PC-9 (cell line): ENCODE measurements at regions of chr15 and their contacts with region 1.

Region 1: GRCh38 chr15:99476413-99477222 is 89.2 kb upstream of the MEF2A start:
- DNase-seq: peak; percentile 42 to 75
- H3K4me3 ChIP-seq: no peak overlapping the region
- H3K27ac ChIP-seq: no peak overlapping the region
- H3K4me1 ChIP-seq: peaks cover 13% of the 10 kb centered on the region
- H3K27me3 ChIP-seq: no peaks in the 10 kb centered on the region
- CTCF ChIP-seq: no peak

Region 2: GRCh38 chr15:99409097-99409473 is 67.5 kb before region 1 on chr15:
- CTCF ChIA-PET with region 1: no interaction called
- POLR2A ChIA-PET with region 1: no interaction called
- intact Hi-C with region 1: no loop called
- DNase-seq: peak; percentile 38 to 60
- H3K4me3 ChIP-seq: no peak overlapping the region
- H3K27ac ChIP-seq: no peak overlapping the region
- H3K4me1 ChIP-seq: no peaks in the 10 kb centered on the region
- H3K27me3 ChIP-seq: no peaks in the 10 kb centered on the region
- CTCF ChIP-seq: peak; percentile 70

Region 3: DNA sequence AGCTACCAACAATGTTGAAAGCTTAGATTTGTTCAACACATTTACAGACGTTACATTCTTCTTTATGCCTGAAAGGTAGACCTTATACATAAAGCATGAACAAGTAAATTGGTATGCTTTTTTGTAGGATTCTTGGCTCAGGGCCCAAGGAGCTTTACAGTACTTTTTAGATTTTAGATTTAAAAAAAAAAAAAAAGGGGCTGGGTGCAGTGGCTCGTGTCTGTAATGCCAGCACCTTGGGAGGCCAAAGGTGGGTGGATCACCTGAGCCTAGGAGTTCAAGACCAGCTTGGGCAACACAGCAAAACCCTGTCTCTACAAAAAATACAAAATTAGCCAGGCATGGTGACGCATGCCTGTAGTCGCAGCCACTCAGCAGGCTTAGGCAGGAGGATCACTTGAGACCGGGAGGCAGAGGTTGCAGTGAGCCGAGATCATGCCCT is 128.9 kb after region 1 on chr15:
- CTCF ChIA-PET with region 1: no interaction called
- POLR2A ChIA-PET with region 1: no interaction called
- intact Hi-C with region 1: no loop called
- DNase-seq: peak in 1 of 2 experiments; percentile 9
- H3K4me3 ChIP-seq: no peak overlapping the region
- H3K27ac ChIP-seq: no peak overlapping the region
- H3K4me1 ChIP-seq: no peaks in the 10 kb centered on the region
- H3K27me3 ChIP-seq: no peaks in the 10 kb centered on the region
- CTCF ChIP-seq: no peak

Region 4: DNA sequence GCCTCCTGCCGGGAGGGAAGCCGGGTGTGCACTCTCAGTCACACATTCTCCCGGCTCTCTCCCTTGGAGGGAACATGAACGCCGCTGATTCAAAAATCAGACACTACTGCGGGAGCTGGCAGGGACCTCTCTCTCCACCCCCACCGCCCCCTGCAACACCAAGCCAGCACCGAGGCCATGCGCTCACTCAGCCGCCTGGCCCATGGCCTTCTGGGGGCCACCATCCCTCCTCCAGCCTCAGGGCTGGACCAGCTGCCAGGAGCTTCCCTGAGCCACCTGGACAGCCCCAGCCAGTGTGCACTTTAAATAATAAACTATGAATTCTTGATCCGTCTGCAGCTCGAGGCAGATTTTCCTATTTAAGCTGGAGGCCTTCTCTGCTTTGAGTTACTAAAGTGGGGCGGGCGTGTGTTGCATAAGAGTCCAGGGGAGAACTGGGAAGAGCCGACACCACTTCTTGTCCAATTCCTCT is 834.6 kb after region 1 on chr15:
- CTCF ChIA-PET with region 1: no interaction called
- POLR2A ChIA-PET with region 1: interaction called, 37 read pairs
- intact Hi-C with region 1: no loop called
- DNase-seq: no peak
- H3K4me3 ChIP-seq: no peak overlapping the region
- H3K27ac ChIP-seq: no peak overlapping the region
- H3K4me1 ChIP-seq: no peaks in the 10 kb centered on the region
- H3K27me3 ChIP-seq: no peaks in the 10 kb centered on the region
- CTCF ChIP-seq: no peak